ENCODE measurements at regions of chr16 and their contacts with region 1.

Region 1: DNA sequence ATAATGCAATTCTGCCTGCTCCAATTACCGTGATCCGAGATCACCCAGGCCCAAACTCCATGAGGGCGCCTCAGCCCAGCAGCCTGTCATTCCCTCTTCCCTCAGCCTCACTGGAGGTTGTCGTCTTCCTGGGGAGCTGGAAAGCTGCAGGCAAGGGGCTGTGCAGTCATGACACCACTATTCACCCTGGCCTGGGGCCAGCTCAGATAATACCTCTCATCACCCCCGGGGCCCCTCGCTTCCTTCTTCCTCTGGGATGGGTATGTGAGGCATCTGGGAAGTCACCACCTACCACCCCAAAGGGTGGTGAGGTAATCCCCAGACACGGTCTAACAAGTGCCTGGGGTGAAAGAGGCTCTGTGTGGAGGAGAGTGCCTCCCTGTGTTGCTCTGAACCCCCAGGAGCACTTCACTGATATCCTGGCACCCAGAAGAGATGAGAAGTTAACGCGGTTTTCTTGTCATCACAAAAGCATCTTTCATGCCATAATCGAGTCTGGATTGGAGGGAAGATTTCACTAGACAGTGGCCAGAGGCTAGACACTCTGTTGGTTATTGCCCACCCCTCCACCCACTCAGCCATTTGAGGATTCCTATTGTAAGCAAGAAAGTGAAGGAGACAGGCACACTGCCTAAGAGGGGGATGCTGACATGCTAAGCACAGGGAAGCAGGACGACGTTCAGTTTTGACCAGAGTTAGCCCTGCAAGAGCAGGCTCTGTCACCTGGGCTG is 18.4 kb downstream of the CFAP20 start:
- DNase-seq: peak; percentile 61
- H3K4me3 ChIP-seq: no peak overlapping the region
- H3K27ac ChIP-seq: peak overlapping the region in 1 of 2 experiments; percentile 51; a peak in 2 of 4 replicates
- H3K4me1 ChIP-seq: peaks cover 9 to 36% of the 10 kb centered on the region in 2 experiments; a peak in 3 of 4 replicates
- H3K27me3 ChIP-seq: no peaks in the 10 kb centered on the region
- CTCF ChIP-seq: no peak
- EP300 ChIP-seq: peak in 1 of 2 experiments; percentile 35; a peak in 1 of 4 replicates
- RAD21 ChIP-seq: no peak

Region 2: GRCh38 chr16:57711346-57712026 is 399.2 kb before region 1 on chr16:
- CTCF ChIA-PET with region 1: no interaction called
- POLR2A ChIA-PET with region 1: no interaction called
- DNase-seq: no peak
- H3K4me3 ChIP-seq: no peak overlapping the region
- H3K27ac ChIP-seq: no peak overlapping the region
- H3K4me1 ChIP-seq: no peaks in the 10 kb centered on the region; a peak in 1 of 4 replicates
- H3K27me3 ChIP-seq: peaks cover 17% of the 10 kb centered on the region
- CTCF ChIP-seq: no peak
- EP300 ChIP-seq: no peak
- RAD21 ChIP-seq: no peak

Region 3: DNA sequence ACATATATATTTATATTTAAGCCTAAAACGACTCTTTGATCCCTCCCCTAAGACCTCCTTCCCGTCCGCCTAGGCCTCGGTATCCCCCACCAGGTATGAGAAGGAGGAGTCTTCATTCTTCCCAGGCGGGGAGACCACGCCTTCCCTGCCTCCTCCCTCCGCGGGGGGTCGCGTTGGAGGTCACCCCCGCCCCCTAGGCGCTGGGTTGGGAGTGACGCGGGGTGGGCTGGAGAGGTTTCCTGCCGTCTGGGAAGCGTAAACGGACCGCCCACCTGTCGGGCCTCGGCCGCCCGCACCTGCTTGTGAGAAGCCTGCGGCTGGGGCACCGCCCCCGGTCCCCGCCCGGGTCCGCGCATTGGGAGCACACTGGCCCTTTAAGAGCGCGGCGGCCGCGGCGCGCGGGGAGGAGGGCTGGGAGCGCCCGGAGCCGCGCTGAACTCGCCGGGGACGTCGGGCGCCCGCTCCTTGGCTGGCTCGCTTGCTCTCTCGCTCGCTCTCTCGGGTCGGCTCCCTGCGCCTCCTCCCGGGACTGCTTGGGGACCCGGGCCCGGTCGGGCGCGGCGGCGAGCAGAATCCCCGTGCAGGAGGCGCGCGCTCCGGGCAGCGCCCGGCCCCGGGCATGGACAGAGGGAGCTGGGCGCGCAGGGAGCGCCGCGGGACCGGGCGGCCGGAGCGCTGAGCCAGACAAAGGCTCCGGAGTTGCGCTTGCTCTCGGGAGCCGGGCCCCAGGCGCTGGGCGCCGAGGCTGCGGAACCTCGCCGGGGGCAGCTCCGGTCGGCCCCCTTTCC is 85.2 kb before region 1 on chr16 and contains the start of gene MMP15:
- CTCF ChIA-PET with region 1: interaction called, 15 read pairs
- POLR2A ChIA-PET with region 1: no interaction called
- DNase-seq: peak; percentile 87
- H3K4me3 ChIP-seq: peak within 1 kb of the TSS; percentile 64
- H3K27ac ChIP-seq: peak within 1 kb of the TSS in 1 of 2 experiments; percentile 69; a peak in 1 of 4 replicates
- H3K4me1 ChIP-seq: peaks cover 13 to 64% of the 10 kb centered on the region in 2 experiments
- H3K27me3 ChIP-seq: peaks cover 13% of the 10 kb centered on the region
- CTCF ChIP-seq: no peak
- EP300 ChIP-seq: no peak
- RAD21 ChIP-seq: no peak
- polyA plus RNA-seq, gene MMP15: 2.6 and 3.1 TPM in 2 replicates

Region 4: GRCh38 chr16:58032710-58033293 is 77.9 kb before region 1 on chr16:
- CTCF ChIA-PET with region 1: interaction called, 16 read pairs
- POLR2A ChIA-PET with region 1: interaction called, 6 read pairs
- DNase-seq: peak; percentile 94
- H3K4me3 ChIP-seq: no peak overlapping the region; a peak in 1 of 4 replicates
- H3K27ac ChIP-seq: peak overlapping the region in 1 of 2 experiments; percentile 96; a peak in 2 of 4 replicates
- H3K4me1 ChIP-seq: peaks cover 0 to 68% of the 10 kb centered on the region in 2 experiments; a peak in 1 of 4 replicates
- H3K27me3 ChIP-seq: no peaks in the 10 kb centered on the region
- CTCF ChIP-seq: no peak
- EP300 ChIP-seq: peak in 1 of 2 experiments; percentile 86; a peak in 2 of 4 replicates
- RAD21 ChIP-seq: peak; percentile 3; the same call in 1 of the 2 replicates

Region 5: GRCh38 chr16:58098207-58099096 is 12.3 kb before region 1 on chr16:
- CTCF ChIA-PET with region 1: interaction called, 47 read pairs
- POLR2A ChIA-PET with region 1: no interaction called
- DNase-seq: no peak
- H3K4me3 ChIP-seq: no peak overlapping the region
- H3K27ac ChIP-seq: no peak overlapping the region
- H3K4me1 ChIP-seq: no peaks in the 10 kb centered on the region; a peak in 1 of 4 replicates
- H3K27me3 ChIP-seq: no peaks in the 10 kb centered on the region
- CTCF ChIP-seq: no peak
- EP300 ChIP-seq: no peak
- RAD21 ChIP-seq: no peak

Region 6: DNA sequence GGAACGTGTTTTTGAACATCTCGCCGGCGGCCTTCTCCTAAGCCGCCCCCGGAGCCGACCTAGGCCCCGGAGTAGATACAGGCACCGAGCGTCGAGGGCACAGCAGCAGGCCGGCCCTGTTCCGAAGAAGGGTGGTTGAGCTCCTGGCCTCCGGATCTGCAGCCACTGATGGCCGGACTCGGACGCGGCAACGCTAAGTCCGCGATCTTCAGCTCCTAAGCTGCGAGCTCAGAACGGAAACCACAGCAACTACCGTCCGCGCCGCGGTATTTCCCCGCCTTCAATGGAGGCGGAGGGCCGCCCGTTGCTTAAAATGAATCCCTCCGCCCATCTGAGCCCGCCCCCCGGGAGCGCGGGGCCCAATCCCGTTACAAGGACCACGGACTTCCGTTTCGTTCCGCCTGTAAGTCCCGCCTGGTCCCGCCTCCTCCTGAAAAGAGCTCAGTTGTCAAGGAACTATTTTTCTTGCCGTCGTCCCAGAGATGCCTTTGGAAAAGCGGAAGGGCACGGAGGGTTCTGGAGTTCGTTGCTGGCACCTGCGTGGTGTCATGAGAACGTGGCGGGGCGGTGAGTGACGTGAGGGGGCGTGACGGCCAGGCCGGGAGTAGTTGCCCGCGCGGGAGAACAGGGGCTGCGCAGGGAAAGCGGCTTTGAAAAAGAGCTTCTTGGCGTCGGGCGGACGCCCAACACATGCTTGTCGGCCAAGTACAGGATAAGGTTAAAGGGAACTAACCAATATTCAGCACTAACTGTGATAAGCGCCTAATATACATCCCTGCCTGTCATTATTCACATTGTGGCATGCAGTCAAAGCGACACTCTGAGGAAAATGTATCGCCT is 18.6 kb after region 1 on chr16 and contains the start of gene CFAP20:
- CTCF ChIA-PET with region 1: interaction called, 19 read pairs
- POLR2A ChIA-PET with region 1: interaction called, 3 read pairs
- DNase-seq: peak; percentile 95
- H3K4me3 ChIP-seq: peak within 1 kb of the TSS; percentile 90 to 92
- H3K27ac ChIP-seq: peak within 1 kb of the TSS; percentile 88 to 94
- H3K4me1 ChIP-seq: peaks cover 11 to 29% of the 10 kb centered on the region in 2 experiments; a peak in 3 of 4 replicates
- H3K27me3 ChIP-seq: no peaks in the 10 kb centered on the region
- CTCF ChIP-seq: no peak
- EP300 ChIP-seq: peak in 1 of 2 experiments; percentile 47; a peak in 1 of 4 replicates
- RAD21 ChIP-seq: no peak
- polyA plus RNA-seq, gene CFAP20: 61.6 and 65.9 TPM in 2 replicates